Tibial artery (tissue), 4 donors: ENCODE measurements at regions of chr6 and their contacts with region 1.

Region 1: GRCh38 chr6:157203312-157203744 is 120.0 kb downstream of the TMEM242 start:
- DNase-seq: no peak
- H3K4me3 ChIP-seq: no peak overlapping the region
- H3K27ac ChIP-seq: no peak overlapping the region
- H3K4me1 ChIP-seq: peaks cover 0 to 47% (median 17%) of the 10 kb centered on the region in 4 donors
- H3K27me3 ChIP-seq: no peaks in the 10 kb centered on the region
- CTCF ChIP-seq: no peak

Region 2: GRCh38 chr6:157164972-157165371 is 38.4 kb before region 1 on chr6:
- intact Hi-C with region 1: loop called (anchors 1 kb)
- DNase-seq: no peak
- H3K4me3 ChIP-seq: no peak overlapping the region
- H3K27ac ChIP-seq: no peak overlapping the region
- H3K4me1 ChIP-seq: peaks cover 0 to 20% (median 7%) of the 10 kb centered on the region in 4 donors
- H3K27me3 ChIP-seq: no peaks in the 10 kb centered on the region
- CTCF ChIP-seq: no peak